Activated CD4-positive, alpha-beta T cell treated with anti-CD3 and anti-CD28 coated beads, Interleukin-2, amount 10 ng/mL, durations not matched to agents 24 days and 14 days (primary cell): ENCODE measurements at regions of chr10 and their contacts with region 1.

Region 1: GRCh38 chr10:33248638-33249037 is 85.8 kb downstream of the NRP1 start:
- DNase-seq: peak; percentile 86
- H3K4me3 Mint-ChIP-seq: peak overlapping the region; percentile 68
- H3K27ac Mint-ChIP-seq: peak overlapping the region; percentile 78
- H3K4me1 Mint-ChIP-seq: peaks cover 65% of the 10 kb centered on the region
- H3K27me3 Mint-ChIP-seq: peaks cover 12% of the 10 kb centered on the region

Region 2: DNA sequence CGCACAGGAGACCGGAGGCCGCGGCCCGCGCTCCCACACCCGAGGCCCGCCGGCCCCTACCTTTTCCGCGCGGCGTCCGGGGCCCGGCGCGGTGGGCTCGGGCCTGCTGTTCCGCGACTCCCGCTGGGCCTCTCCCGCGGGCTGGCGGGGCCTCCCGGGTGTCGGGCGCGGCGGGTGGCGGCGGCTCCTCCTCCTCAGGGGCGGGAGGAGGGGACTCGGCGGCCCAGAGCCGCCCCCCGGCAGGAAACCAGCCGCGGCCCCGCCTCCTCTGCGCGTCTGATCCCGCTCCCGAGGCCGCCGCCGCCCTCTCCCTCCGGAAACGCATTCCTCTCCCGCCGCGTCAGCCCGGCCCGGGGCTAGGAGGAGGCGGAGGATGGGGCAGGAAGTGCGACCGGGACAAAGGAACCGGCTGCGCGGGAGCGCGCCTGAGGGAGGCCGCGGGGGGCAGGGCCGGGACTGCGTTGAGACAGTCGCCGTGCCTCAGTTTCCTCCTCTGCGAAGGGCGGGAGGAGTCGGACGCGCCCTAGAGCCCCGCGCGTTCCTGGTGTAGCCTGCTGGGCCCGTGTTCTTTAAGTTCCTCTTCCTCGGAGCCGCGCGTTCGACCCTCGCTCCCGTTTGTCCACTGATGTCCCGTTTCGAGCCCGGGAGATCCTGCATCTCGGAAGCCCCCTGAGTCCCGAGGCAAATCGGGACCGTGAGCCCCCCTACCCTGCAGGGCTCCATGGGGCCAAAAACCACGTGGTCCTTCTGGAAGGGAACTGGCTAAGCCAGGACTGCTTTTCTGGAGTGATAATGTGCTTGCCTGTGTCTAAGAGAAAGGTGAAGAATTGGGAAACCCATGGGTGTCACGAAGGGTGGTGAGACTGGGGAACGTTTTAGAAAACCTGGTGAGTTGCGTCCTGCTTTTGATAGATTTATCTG is 290.3 kb before region 1 on chr10 and contains the start of gene ITGB1:
- intact Hi-C with region 1: loop called (anchors 2 kb)
- DNase-seq: peak; percentile 96
- H3K4me3 Mint-ChIP-seq: peak within 1 kb of the TSS; percentile 86
- H3K27ac Mint-ChIP-seq: peak within 1 kb of the TSS; percentile 92
- H3K4me1 Mint-ChIP-seq: peaks cover 32% of the 10 kb centered on the region
- H3K27me3 Mint-ChIP-seq: peaks cover 9% of the 10 kb centered on the region
- total RNA-seq, gene ITGB1: 50.5 and 57.5 TPM in 2 replicates

Region 3: DNA sequence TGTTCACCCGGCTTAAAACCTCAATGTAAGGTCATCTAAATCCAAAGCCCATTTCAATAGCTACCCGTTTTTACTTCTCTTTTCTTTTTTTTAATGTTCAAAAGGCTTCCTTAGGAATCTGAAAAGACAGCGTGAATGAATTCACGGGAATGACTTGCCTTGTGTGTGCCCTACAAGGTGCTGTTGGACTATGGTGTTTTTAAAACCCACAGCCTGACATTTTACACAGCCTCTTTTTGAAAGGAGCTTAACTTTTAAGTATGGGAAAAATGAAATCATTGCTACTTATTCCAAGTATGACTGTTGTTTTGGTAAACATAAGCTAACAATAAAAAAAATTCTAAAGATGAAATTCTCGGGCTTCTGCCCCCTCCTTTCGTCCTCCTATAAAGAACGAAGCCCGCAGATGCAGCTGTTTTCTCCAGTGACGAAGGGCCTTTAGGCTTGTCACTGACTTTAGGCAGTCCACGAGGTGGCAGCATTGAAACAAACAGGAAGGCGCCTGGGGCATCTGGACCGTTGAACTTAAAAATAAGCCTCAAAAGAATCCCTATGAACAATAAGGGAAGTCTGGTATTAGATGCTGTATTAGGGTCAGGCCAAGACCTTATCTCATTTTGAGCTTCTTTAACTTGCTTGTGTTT is 55.5 kb before region 1 on chr10:
- intact Hi-C with region 1: loop called (anchors 2 kb)
- DNase-seq: peak; percentile 90
- H3K4me3 Mint-ChIP-seq: no peak overlapping the region
- H3K27ac Mint-ChIP-seq: no peak overlapping the region
- H3K4me1 Mint-ChIP-seq: no peaks in the 10 kb centered on the region
- H3K27me3 Mint-ChIP-seq: peaks cover 45% of the 10 kb centered on the region

Region 4: GRCh38 chr10:33223326-33224000 is 25.2 kb before region 1 on chr10:
- intact Hi-C with region 1: no loop called
- DNase-seq: no peak
- H3K4me3 Mint-ChIP-seq: no peak overlapping the region
- H3K27ac Mint-ChIP-seq: no peak overlapping the region
- H3K4me1 Mint-ChIP-seq: no peaks in the 10 kb centered on the region
- H3K27me3 Mint-ChIP-seq: peaks cover 2% of the 10 kb centered on the region

Region 5: GRCh38 chr10:33258967-33259366 is 10.3 kb after region 1 on chr10:
- intact Hi-C with region 1: loop called (anchors 1 kb)
- DNase-seq: no peak
- H3K4me3 Mint-ChIP-seq: no peak overlapping the region
- H3K27ac Mint-ChIP-seq: no peak overlapping the region
- H3K4me1 Mint-ChIP-seq: peaks cover 6% of the 10 kb centered on the region
- H3K27me3 Mint-ChIP-seq: peaks cover 23% of the 10 kb centered on the region

Region 6: DNA sequence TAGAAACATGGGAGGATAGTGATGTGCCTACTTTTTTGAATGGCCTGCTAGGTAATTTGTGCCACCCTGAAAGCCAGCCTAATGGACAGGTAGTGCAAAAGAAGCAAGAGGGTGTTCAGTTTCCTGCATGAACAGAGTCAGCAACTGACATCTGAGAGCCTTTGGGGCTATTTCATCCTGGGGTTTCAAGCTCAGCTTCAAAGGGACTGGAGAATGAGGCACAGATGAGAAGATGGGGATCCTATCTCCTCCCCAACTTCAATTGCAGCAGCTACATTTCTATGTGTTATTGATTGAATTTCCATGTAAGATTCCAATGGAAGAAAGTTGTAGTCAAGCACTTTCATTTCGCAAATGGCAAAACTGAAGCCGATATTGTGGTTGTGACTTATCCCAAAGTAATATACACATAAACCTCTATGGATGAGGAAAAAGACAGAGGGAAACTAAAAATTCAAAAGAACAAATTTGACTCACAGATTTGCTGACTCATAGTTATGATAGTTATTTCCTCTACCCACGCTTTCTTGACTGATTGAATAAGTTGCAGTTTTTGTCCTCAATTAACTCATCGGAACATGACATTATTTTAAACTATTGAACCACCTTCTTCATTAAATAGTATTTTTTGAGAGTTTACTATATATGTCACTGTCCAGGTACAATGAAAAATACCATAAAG is 128.5 kb after region 1 on chr10:
- intact Hi-C with region 1: loop called (anchors 2 kb)
- DNase-seq: no peak
- H3K4me3 Mint-ChIP-seq: no peak overlapping the region
- H3K27ac Mint-ChIP-seq: peak overlapping the region; percentile 76
- H3K4me1 Mint-ChIP-seq: peaks cover 18% of the 10 kb centered on the region
- H3K27me3 Mint-ChIP-seq: no peaks in the 10 kb centered on the region

Region 7: DNA sequence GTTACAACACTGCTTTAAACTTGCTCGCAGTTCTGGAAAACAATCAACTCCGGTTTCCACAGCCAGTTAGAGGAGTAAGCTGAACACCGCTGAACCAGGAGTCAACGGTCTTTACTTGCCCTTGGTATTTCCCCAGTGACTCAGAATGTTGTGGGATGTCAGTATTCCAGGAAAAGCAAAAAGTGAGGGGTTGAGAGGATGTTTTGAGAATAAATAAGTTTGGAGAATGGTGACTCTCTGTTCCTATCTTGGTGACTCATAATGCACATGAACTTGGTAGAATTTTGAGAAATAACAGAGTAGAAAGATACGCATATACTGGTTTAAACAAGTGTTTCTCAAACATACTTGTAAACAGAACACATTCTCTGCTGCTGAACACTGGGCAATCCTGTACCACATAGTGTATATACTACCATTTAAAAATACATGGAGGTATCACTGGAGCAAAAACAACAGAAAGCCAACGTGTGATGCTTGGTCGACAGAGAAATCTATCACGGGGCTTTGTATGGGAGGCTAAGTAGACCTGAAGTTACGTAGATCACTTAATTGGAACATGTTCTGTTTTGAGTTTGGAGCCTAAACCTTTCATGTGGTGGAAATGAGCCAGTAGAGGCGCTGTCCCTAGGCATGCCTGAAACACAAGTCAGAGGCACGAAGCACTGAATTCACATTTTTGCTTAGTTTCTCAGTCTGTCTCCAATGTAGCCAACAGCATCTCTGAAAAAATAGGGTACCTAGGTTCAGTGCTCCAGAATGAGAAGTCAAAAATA is 1032.1 kb after region 1 on chr10:
- intact Hi-C with region 1: loop called (anchors 1 kb)
- DNase-seq: peak; percentile 61
- H3K4me3 Mint-ChIP-seq: peak overlapping the region; percentile 39
- H3K27ac Mint-ChIP-seq: peak overlapping the region; percentile 83
- H3K4me1 Mint-ChIP-seq: peaks cover 25% of the 10 kb centered on the region
- H3K27me3 Mint-ChIP-seq: peaks cover 4% of the 10 kb centered on the region